ENCODE measurements at regions of chr21 and their contacts with region 1.

Region 1: GRCh38 chr21:39564200-39564599 is 48.5 kb upstream of the B3GALT5 start:
- DNase-seq: no peak
- ATAC-seq: no peak
- H3K4me3 Mint-ChIP-seq: no peak overlapping the region
- H3K27ac Mint-ChIP-seq: no peak overlapping the region
- H3K4me1 Mint-ChIP-seq: no peaks in the 10 kb centered on the region
- H3K27me3 Mint-ChIP-seq: no peaks in the 10 kb centered on the region

Region 2: GRCh38 chr21:39625211-39625895 is 61.2 kb after region 1 on chr21:
- CTCF ChIA-PET with region 1: no interaction called
- POLR2A ChIA-PET with region 1: no interaction called
- intact Hi-C with region 1: loop called in 1 of 2 experiments (anchors 10 kb)
- DNase-seq: no peak
- ATAC-seq: no peak
- H3K4me3 Mint-ChIP-seq: no peak overlapping the region
- H3K27ac Mint-ChIP-seq: no peak overlapping the region
- H3K4me1 Mint-ChIP-seq: no peaks in the 10 kb centered on the region
- H3K27me3 Mint-ChIP-seq: peaks cover 12% of the 10 kb centered on the region

Region 3: GRCh38 chr21:40200946-40201345 is 636.7 kb after region 1 on chr21:
- CTCF ChIA-PET with region 1: no interaction called
- POLR2A ChIA-PET with region 1: no interaction called
- intact Hi-C with region 1: no loop called
- DNase-seq: no peak
- ATAC-seq: no peak
- H3K4me3 Mint-ChIP-seq: no peak overlapping the region
- H3K27ac Mint-ChIP-seq: no peak overlapping the region
- H3K4me1 Mint-ChIP-seq: no peaks in the 10 kb centered on the region
- H3K27me3 Mint-ChIP-seq: no peaks in the 10 kb centered on the region

Region 4: DNA sequence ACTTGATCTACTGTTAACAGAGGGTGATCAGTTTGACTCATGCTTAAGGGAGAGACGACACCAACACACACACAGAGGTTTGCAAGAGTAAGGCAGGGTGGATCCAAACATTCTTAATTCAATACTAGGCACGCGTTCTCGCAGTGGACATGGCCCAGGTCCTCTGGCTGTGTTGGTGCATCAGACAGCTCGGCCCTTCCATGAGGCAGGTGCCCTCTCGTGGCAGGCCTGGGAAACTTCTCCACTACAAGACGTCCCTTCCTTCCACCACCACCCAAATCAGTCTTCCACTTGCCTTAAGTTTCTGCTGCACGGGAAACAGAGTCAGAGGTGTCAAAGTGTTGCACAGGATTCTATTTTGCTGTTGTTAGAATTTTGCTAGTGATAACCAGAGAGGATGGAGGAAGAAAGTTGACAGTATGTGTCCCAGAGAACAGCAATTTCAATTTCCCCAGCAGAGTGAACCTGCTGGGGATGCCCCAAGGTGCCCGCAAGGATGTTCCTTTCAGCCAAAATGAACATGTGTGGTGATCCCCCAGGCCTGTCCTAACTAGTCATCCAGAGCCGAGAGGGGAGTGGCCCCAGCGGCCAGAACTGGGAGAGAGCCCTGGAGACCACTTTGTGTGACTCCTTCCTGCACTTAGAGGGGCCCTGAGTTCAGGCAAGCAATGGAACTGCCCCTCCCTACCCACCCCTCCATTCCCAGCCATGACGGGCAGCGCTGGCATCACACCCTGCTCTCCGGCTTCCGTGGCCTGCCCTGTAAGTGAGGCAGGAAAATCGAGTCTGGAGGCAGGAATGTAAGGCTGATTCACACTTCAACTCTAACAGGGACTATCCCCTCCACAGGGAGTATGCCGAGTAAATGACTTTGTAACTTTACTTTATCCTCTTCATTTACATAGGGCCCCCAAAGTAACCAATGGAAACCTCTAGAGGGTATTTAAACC is 1896.7 kb after region 1 on chr21:
- CTCF ChIA-PET with region 1: no interaction called
- POLR2A ChIA-PET with region 1: no interaction called
- intact Hi-C with region 1: no loop called
- DNase-seq: peak; percentile 77
- ATAC-seq: peak; percentile 79
- H3K4me3 Mint-ChIP-seq: no peak overlapping the region
- H3K27ac Mint-ChIP-seq: no peak overlapping the region
- H3K4me1 Mint-ChIP-seq: peaks cover 2% of the 10 kb centered on the region
- H3K27me3 Mint-ChIP-seq: no peaks in the 10 kb centered on the region